ENCODE measurements at regions of chr3 and their contacts with region 1.

Region 1: DNA sequence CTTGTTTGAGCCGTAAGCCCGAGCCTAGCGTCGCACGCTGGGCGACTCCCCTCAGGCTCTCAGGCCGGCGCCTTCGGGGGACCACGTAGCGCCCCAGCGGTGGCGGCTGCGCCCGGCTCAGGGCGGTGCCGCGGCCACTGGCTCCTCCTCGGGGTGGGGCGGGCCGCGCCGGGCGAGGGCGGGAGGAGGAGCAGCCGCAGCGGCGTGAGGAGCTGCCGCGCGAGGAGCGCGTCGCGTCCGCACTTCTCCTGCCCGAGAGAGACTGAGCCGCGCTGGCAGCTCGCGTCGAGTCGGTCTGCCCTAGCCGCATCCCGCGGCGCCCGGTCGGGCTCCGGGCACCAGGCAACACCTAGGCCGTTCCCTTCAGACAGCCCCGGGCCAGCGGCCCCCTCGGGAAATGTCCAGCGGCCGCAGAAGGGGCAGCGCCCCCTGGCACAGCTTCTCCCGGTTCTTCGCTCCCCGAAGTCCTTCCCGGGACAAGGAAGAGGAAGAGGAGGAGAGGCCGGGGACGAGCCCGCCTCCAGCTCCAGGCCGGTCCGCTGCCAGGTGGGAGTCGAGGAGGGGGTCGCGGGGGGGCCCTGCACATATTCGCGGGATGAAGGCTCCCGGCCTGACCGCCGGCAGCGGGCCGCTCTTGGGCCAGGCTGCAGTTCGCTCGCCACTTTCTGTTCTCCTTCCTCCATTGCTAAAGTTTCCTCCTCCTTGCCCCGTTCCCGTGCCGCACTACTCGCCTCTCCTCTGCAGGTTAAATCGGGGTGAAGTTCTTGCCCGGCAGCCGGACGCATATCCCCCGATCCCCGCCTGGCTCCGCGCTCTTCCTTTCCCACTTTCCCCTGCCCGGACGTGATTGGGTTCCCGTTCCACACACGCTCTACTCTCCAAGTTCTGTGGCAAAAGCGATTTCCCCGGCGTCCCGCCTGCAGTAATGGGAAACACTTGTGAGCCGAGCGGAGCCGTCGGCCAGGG is at the start of gene CRYBG3:
- DNase-seq: peak; percentile 87 to 94 (median 89)
- ATAC-seq: peak; percentile 94 to 99 (median 98)
- H3K4me3 ChIP-seq: peak within 1 kb of the TSS; percentile 72 to 98 (median 84)
- H3K27ac ChIP-seq: peak within 1 kb of the TSS; percentile 83 to 95 (median 91)
- H3K4me1 ChIP-seq: peaks cover 0 to 40% (median 26%) of the 10 kb centered on the region in 12 donors
- H3K27me3 ChIP-seq: no peaks in the 10 kb centered on the region
- CTCF ChIP-seq: peak in 9 of 12 donors; percentile 10 to 58 (median 30)
- POLR2A ChIP-seq: peak; percentile 39 to 93
- total RNA-seq, gene CRYBG3: 18.7 to 34.1 (median 21.4) TPM

Region 2: DNA sequence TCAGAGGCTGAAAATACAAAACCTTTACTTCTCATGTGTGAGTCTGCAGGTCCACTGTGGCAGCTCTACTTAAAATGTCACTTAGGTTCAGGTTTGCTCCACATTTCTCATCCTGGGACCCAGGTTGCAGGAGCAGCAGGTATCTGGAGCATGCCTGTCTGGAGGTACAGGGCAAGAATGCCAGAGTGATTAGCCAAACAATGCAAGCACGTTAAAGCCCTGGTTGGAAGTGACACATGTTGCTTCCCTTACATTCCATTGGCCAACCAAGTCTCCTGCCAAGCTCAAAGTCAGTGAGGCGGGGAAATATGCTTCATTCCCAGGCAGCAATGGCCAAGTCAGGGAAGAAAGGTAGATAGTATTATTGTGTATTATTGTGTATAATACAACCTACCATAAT is 134.4 kb before region 1 on chr3:
- intact Hi-C with region 1: no loop called
- DNase-seq: no peak
- ATAC-seq: no peak
- H3K4me3 ChIP-seq: no peak overlapping the region
- H3K27ac ChIP-seq: no peak overlapping the region
- H3K4me1 ChIP-seq: no peaks in the 10 kb centered on the region
- H3K27me3 ChIP-seq: no peaks in the 10 kb centered on the region
- CTCF ChIP-seq: no peak
- POLR2A ChIP-seq: no peak

Region 3: GRCh38 chr3:97804471-97804870 is 17.6 kb before region 1 on chr3:
- intact Hi-C with region 1: no loop called
- DNase-seq: no peak
- ATAC-seq: no peak
- H3K4me3 ChIP-seq: no peak overlapping the region
- H3K27ac ChIP-seq: no peak overlapping the region
- H3K4me1 ChIP-seq: no peaks in the 10 kb centered on the region
- H3K27me3 ChIP-seq: no peaks in the 10 kb centered on the region
- CTCF ChIP-seq: no peak
- POLR2A ChIP-seq: no peak

Region 4: DNA sequence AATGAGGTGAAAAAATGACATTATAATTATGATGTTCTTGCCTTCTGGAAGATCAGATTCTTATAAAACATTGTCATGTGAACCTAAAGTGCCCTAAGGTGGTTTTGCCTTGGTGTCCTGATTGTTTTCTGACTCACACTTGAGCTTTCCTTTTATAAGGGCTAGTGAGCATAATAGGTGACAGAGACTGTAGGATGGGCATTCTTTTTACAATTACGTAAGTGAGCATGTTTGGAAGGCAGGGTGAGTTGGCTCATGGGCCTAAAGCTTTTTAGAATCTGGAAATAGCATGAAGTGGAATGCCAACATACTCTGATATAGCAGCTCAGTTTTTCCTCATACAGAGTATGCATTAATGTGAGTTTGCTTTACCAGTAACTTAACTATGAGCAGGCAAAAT is 40.9 kb after region 1 on chr3:
- intact Hi-C with region 1: loop called in 3 of 10 experiments (anchors 5 kb)
- DNase-seq: no peak
- ATAC-seq: peak; percentile 81 to 93 (median 84)
- H3K4me3 ChIP-seq: no peak overlapping the region
- H3K27ac ChIP-seq: peak overlapping the region in 6 of 12 donors; percentile 3 to 66 (median 36)
- H3K4me1 ChIP-seq: peaks cover 0 to 25% (median 9%) of the 10 kb centered on the region in 12 donors
- H3K27me3 ChIP-seq: no peaks in the 10 kb centered on the region
- CTCF ChIP-seq: no peak
- POLR2A ChIP-seq: no peak

Region 5: GRCh38 chr3:97885931-97886824 is 64.1 kb after region 1 on chr3:
- intact Hi-C with region 1: loop called in 3 of 10 experiments (anchors 5 to 10 kb)
- DNase-seq: no peak
- ATAC-seq: peak in 2 of 4 donors; percentile 42 to 60
- H3K4me3 ChIP-seq: no peak overlapping the region
- H3K27ac ChIP-seq: peak overlapping the region in 11 of 12 donors; percentile 28 to 65 (median 49)
- H3K4me1 ChIP-seq: peaks cover 0 to 42% (median 26%) of the 10 kb centered on the region in 12 donors
- H3K27me3 ChIP-seq: no peaks in the 10 kb centered on the region
- CTCF ChIP-seq: no peak
- POLR2A ChIP-seq: no peak

Region 6: GRCh38 chr3:97901313-97902248 is 79.5 kb after region 1 on chr3:
- intact Hi-C with region 1: loop called in 2 of 10 experiments (anchors 5 to 10 kb)
- DNase-seq: peak in 1 of 5 donors; percentile 18
- ATAC-seq: peak in 2 of 4 donors; percentile 62 to 63
- H3K4me3 ChIP-seq: peak overlapping the region in 4 of 12 donors; percentile 2 to 25 (median 12)
- H3K27ac ChIP-seq: peak overlapping the region; percentile 55 to 85 (median 70)
- H3K4me1 ChIP-seq: peaks cover 0 to 31% (median 16%) of the 10 kb centered on the region in 12 donors
- H3K27me3 ChIP-seq: no peaks in the 10 kb centered on the region
- CTCF ChIP-seq: no peak
- POLR2A ChIP-seq: no peak

Region 7: GRCh38 chr3:97932387-97932801 is 110.3 kb after region 1 on chr3:
- intact Hi-C with region 1: loop called in 2 of 10 experiments (anchors 10 kb)
- DNase-seq: peak in 4 of 5 donors; percentile 20 to 32 (median 26)
- ATAC-seq: peak; percentile 73 to 82 (median 74)
- H3K4me3 ChIP-seq: no peak overlapping the region
- H3K27ac ChIP-seq: peak overlapping the region in 1 of 12 donors; percentile 27
- H3K4me1 ChIP-seq: peaks cover 0 to 14% (median 4%) of the 10 kb centered on the region in 12 donors
- H3K27me3 ChIP-seq: no peaks in the 10 kb centered on the region
- CTCF ChIP-seq: peak in 1 of 12 donors; percentile 20
- POLR2A ChIP-seq: no peak